ENCODE measurements at regions of chr1 and their contacts with region 1.

Region 1: GRCh38 chr1:111203681-111204200 is 3.3 kb upstream of the DENND2D start:
- DNase-seq: peak; percentile 60 to 92 (median 88)
- ATAC-seq: peak; percentile 41
- H3K4me3 ChIP-seq: peak overlapping the region; percentile 74 to 93
- H3K4me3 Mint-ChIP-seq: peak overlapping the region; percentile 94
- H3K27ac ChIP-seq: peak overlapping the region; percentile 74 to 84
- H3K27ac Mint-ChIP-seq: peak overlapping the region; percentile 97
- H3K4me1 ChIP-seq: peaks cover 54% of the 10 kb centered on the region
- H3K4me1 Mint-ChIP-seq: peaks cover 76% of the 10 kb centered on the region
- H3K27me3 ChIP-seq: no peaks in the 10 kb centered on the region
- H3K27me3 Mint-ChIP-seq: no peaks in the 10 kb centered on the region
- CTCF ChIP-seq: no peak

Region 2: DNA sequence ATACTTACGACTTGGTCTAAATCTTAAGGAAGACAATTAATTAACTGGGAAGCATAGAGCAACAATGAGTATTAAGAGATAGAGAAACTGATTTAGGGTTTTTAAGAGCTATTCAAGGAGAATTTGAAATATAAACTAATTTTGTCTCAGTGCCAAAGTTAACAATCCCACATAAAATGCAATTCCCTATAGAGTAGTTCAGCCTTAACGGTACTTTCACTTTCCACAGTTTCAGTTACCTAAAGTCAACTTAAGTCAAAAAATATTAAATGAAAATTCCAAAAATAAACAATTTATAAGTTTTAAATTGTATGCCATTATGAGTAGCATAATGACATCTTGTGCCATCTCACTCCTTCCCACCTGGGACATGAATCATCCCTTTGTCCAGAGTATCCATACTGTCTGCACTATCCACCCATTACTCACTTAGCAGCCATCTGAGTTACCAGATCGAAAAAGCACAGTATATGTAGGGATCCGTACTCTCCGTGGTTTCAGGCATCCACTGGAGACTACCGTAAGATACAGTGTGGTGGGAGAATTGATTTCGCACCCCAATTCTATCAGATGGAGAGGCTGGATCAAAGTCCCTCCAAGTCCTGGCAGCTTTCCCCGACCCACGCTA is 1994.8 kb before region 1 on chr1:
- CTCF ChIA-PET with region 1: no interaction called
- POLR2A ChIA-PET with region 1: no interaction called
- intact Hi-C with region 1: no loop called
- DNase-seq: no peak
- ATAC-seq: no peak
- H3K4me3 ChIP-seq: no peak overlapping the region
- H3K4me3 Mint-ChIP-seq: no peak overlapping the region
- H3K27ac ChIP-seq: no peak overlapping the region
- H3K27ac Mint-ChIP-seq: no peak overlapping the region
- H3K4me1 ChIP-seq: peaks cover 4% of the 10 kb centered on the region
- H3K4me1 Mint-ChIP-seq: peaks cover 4% of the 10 kb centered on the region
- H3K27me3 ChIP-seq: no peaks in the 10 kb centered on the region
- H3K27me3 Mint-ChIP-seq: peaks cover 2% of the 10 kb centered on the region
- CTCF ChIP-seq: no peak

Region 3: DNA sequence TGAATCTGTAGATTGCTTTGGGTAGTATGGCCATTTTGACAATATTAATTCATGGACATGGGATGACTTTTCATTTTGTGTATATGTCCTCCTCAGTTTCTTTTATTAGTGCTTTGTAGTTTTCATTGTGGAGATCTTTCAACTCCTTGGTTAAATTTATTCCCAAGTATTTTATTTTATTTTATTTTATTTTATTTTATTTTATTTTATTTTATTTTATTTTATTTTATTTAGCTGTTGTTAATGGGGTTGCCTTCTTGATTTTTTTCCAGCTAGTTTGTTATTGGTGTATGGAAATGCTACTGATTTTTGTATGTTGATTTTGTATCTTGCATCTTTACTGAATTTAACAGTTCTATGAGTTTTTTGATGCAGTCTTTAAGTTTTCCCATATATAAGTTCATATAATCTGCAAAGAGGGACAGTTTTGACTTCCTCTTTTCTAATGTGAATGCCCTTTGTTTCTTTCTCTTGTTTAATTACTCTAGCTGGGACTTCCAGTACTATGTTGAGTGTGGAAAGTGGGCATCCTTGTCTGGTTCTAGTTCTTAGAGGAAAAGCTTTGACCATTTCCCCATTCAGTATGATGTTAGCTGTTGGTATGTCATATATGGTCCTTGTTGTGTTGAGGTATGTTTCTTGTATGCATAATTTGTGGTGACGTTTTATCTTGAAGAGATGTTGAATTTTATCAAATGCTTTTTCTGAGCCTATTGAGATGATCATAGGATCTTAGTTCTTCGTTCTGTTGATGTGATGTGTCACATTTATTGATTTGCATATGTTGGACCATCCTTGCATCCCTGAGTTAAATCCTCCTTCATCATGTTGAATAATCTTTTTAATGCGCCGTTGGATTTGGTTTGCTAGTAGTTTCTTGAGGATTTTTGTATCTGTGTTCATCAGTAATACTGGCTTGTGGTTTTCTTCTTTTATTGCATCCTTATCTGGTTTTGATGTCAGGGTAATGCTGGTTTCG is 49.4 kb before region 1 on chr1:
- CTCF ChIA-PET with region 1: no interaction called
- POLR2A ChIA-PET with region 1: no interaction called
- intact Hi-C with region 1: no loop called
- DNase-seq: no peak
- ATAC-seq: no peak
- H3K4me3 ChIP-seq: no peak overlapping the region
- H3K4me3 Mint-ChIP-seq: no peak overlapping the region
- H3K27ac ChIP-seq: no peak overlapping the region
- H3K27ac Mint-ChIP-seq: no peak overlapping the region
- H3K4me1 ChIP-seq: peaks cover 18% of the 10 kb centered on the region
- H3K4me1 Mint-ChIP-seq: peaks cover 76% of the 10 kb centered on the region
- H3K27me3 ChIP-seq: no peaks in the 10 kb centered on the region
- H3K27me3 Mint-ChIP-seq: no peaks in the 10 kb centered on the region
- CTCF ChIP-seq: no peak

Region 4: DNA sequence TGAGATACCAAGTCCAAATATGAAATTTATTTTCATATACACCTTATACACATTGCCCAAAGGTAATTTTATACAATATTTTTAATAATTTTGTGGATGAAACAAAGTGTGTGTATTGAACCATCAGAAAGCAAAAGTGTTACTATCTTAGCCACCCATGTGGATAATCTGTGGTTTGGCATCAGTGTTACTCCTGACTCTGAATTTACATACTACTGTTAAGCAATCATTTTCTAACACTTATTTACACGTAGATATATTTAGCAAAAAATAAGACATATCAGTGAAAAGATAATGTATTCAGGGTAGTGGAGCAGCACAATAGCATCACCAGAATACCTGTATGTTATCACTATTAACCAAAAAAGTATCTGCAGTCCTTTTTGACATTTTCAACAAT is 27.1 kb before region 1 on chr1:
- CTCF ChIA-PET with region 1: interaction called, 13 read pairs
- POLR2A ChIA-PET with region 1: interaction called, 3 read pairs
- intact Hi-C with region 1: loop called in 1 of 2 experiments (anchors 2 kb)
- DNase-seq: no peak
- ATAC-seq: no peak
- H3K4me3 ChIP-seq: no peak overlapping the region
- H3K4me3 Mint-ChIP-seq: no peak overlapping the region
- H3K27ac ChIP-seq: no peak overlapping the region
- H3K27ac Mint-ChIP-seq: no peak overlapping the region
- H3K4me1 ChIP-seq: peaks cover 27% of the 10 kb centered on the region
- H3K4me1 Mint-ChIP-seq: peaks cover 67% of the 10 kb centered on the region
- H3K27me3 ChIP-seq: no peaks in the 10 kb centered on the region
- H3K27me3 Mint-ChIP-seq: no peaks in the 10 kb centered on the region
- CTCF ChIP-seq: no peak

Region 5: GRCh38 chr1:111214074-111214801 is 10.5 kb after region 1 on chr1:
- CTCF ChIA-PET with region 1: interaction called, 429 read pairs
- POLR2A ChIA-PET with region 1: interaction called, 430 read pairs
- intact Hi-C with region 1: loop called (anchors 1 kb)
- DNase-seq: no peak
- ATAC-seq: no peak
- H3K4me3 ChIP-seq: peak overlapping the region in 1 of 2 experiments; percentile 26
- H3K4me3 Mint-ChIP-seq: peak overlapping the region; percentile 72
- H3K27ac ChIP-seq: peak overlapping the region; percentile 65 to 84
- H3K27ac Mint-ChIP-seq: peak overlapping the region; percentile 94
- H3K4me1 ChIP-seq: peaks cover 65% of the 10 kb centered on the region
- H3K4me1 Mint-ChIP-seq: peaks cover 90% of the 10 kb centered on the region
- H3K27me3 ChIP-seq: no peaks in the 10 kb centered on the region
- H3K27me3 Mint-ChIP-seq: no peaks in the 10 kb centered on the region
- CTCF ChIP-seq: no peak

Region 6: DNA sequence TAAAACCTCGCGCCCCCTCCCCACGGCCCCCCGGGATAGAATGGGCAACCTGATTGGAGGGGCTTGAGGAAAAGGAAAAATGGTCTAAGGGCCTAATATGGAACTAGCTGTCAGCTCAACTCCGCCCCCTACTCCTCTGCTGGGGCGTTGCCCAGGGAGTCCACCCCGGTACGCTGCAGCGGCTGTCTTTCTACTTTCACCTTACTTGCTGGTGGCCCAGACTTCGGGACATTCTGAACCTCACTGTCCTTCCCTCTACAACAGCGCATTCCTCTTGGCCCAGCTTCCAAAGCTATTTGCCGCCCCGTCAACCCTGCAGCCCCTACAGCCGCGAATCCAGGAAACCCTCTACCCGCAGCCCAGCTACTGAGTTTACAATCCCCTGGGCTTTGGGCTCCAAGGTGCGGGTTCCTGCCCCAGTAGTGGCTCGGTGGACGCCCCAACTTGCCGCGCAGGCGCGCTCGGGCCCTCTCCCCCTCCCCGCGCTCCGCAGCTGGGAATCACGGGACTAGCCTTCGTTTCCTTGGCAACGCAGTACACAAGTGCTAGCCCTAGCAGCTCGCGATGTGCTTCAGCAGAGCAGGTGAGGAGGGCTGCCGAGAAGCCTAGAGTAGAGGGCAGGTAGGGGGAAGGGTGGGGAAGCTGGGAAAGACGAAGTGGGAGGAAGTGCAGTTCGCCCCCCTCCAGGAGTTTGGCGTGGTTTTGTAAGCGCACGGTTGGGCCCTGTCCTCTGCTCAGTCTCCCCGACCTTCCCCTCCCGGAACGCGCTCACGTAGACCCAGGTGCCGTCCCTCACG is 142.5 kb after region 1 on chr1:
- CTCF ChIA-PET with region 1: interaction called, 9 read pairs
- POLR2A ChIA-PET with region 1: interaction called, 5 read pairs
- intact Hi-C with region 1: loop called in 1 of 2 experiments (anchors 1 kb)
- DNase-seq: peak; percentile 75 to 96 (median 87)
- ATAC-seq: peak; percentile 86
- H3K4me3 ChIP-seq: peak overlapping the region; percentile 67 to 68
- H3K4me3 Mint-ChIP-seq: peak overlapping the region; percentile 89
- H3K27ac ChIP-seq: peak overlapping the region; percentile 51 to 63
- H3K27ac Mint-ChIP-seq: peak overlapping the region; percentile 90
- H3K4me1 ChIP-seq: no peaks in the 10 kb centered on the region
- H3K4me1 Mint-ChIP-seq: peaks cover 23% of the 10 kb centered on the region
- H3K27me3 ChIP-seq: no peaks in the 10 kb centered on the region
- H3K27me3 Mint-ChIP-seq: no peaks in the 10 kb centered on the region
- CTCF ChIP-seq: no peak

Region 7: DNA sequence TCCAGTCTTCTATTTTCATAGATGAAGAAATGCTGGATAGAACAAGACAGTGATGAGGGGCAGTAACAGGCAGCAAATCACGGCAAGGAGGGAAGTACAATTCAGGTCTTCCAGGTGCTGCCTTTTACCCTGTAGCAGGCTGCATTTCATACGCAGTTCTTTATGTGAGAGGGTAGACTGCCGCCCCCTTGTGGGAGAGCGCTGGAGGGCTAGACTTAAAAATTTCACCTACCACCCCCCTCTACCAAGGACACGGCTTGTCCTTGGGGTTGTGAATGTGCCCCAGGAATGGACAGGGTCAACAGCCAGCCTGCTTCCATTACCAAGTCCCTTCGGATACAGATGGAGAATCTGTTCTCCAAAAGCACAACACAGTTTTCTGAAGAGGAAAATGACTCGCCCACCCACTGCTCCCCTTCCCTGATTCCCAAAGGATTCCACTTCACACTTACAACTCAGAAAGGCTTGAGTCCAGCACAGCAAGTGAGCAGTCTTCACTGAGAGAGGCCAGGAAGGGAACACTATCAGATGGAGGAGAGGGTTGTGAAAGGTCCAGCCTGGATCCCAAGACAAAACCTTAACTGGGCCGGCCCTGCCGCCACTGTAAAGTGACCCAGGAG is 237.9 kb after region 1 on chr1:
- CTCF ChIA-PET with region 1: no interaction called
- POLR2A ChIA-PET with region 1: no interaction called
- intact Hi-C with region 1: loop called (anchors 5 kb)
- DNase-seq: peak; percentile 42 to 80 (median 71)
- ATAC-seq: peak; percentile 97
- H3K4me3 ChIP-seq: no peak overlapping the region
- H3K4me3 Mint-ChIP-seq: no peak overlapping the region
- H3K27ac ChIP-seq: no peak overlapping the region
- H3K27ac Mint-ChIP-seq: peak overlapping the region; percentile 80
- H3K4me1 ChIP-seq: peaks cover 16% of the 10 kb centered on the region
- H3K4me1 Mint-ChIP-seq: peaks cover 42% of the 10 kb centered on the region
- H3K27me3 ChIP-seq: no peaks in the 10 kb centered on the region
- H3K27me3 Mint-ChIP-seq: no peaks in the 10 kb centered on the region
- CTCF ChIP-seq: peak; percentile 57